Heart left ventricle (tissue), 16 donors: ENCODE measurements at regions of chr1 and their contacts with region 1.

Region 1: DNA sequence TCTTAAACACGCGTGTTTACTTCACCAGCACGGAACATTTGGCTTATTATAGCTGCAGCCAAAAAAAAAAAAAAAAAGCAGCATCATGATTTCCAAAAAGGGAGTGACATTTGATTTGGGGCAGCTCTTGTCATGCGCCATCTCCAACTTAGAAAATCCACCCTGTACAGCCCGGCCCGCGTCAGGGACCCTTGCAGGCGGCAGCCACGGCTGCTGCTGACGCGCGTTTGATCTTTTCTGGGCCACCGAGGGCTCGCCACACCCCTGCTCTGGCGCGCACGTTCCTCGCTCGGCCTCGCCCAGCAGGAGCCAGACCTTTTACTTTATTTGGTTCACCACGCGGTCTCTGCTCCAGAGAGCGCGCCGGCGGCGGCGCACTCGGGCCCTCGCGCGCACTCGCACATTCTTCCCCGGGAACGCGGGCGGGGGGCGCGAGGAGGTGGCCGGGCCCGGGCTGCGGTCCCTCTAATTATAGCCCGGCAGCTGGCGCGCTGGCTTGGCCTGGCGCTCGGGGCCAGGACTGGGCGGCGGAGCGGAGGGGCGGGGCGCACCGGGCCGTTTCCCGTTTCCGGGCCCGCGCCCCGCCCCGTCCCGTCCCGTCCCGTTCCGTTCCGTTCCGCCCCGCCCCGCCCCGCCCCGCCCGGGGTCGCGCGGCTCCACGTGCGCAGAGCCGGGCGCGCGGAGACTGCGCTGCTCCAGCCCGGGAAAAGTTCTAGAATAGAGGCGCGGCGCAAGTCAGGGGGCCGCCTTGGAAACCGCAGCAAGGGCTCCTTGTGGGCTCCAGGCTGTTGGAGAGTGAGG is 10.2 kb downstream of the IRF2BP2 start:
- DNase-seq: peak; percentile 91 to 96 (median 94)
- ATAC-seq: peak; percentile 77 to 95 (median 88)
- H3K4me3 ChIP-seq: peak overlapping the region in 11 of 12 donors; percentile 29 to 86 (median 51)
- H3K27ac ChIP-seq: peak overlapping the region; percentile 88 to 100 (median 99)
- H3K4me1 ChIP-seq: peaks cover 29 to 66% (median 50%) of the 10 kb centered on the region in 12 donors
- H3K27me3 ChIP-seq: no peaks in the 10 kb centered on the region
- CTCF ChIP-seq: peak in 1 of 12 donors; percentile 10
- POLR2A ChIP-seq: peak in 1 of 2 donors; percentile 74

Region 2: GRCh38 chr1:234478481-234479309 is 121.1 kb before region 1 on chr1 and contains the start of gene TARBP1:
- intact Hi-C with region 1: no loop called
- DNase-seq: peak; percentile 68 to 87 (median 72)
- ATAC-seq: peak; percentile 81 to 93 (median 86)
- H3K4me3 ChIP-seq: peak within 1 kb of the TSS; percentile 12 to 96 (median 82)
- H3K27ac ChIP-seq: peak within 1 kb of the TSS; percentile 71 to 97 (median 88)
- H3K4me1 ChIP-seq: peaks cover 0 to 37% (median 11%) of the 10 kb centered on the region in 12 donors
- H3K27me3 ChIP-seq: peaks cover 0 to 7% (median 0%) of the 10 kb centered on the region in 9 donors
- CTCF ChIP-seq: peak in 6 of 12 donors; percentile 5 to 33 (median 22)
- POLR2A ChIP-seq: peak in 1 of 2 donors; percentile 66
- total RNA-seq, gene TARBP1: 7.1 to 18.2 (median 9.9) TPM

Region 3: GRCh38 chr1:234533975-234534876 is 65.6 kb before region 1 on chr1:
- intact Hi-C with region 1: loop called (anchors 1 to 5 kb)
- DNase-seq: peak; percentile 93 to 97 (median 94)
- ATAC-seq: peak; percentile 7 to 19 (median 16)
- H3K4me3 ChIP-seq: peak overlapping the region in 1 of 12 donors; percentile 13
- H3K27ac ChIP-seq: peak overlapping the region; percentile 91 to 99 (median 98)
- H3K4me1 ChIP-seq: peaks cover 35 to 100% (median 98%) of the 10 kb centered on the region in 12 donors
- H3K27me3 ChIP-seq: no peaks in the 10 kb centered on the region
- CTCF ChIP-seq: no peak
- POLR2A ChIP-seq: no peak

Region 4: GRCh38 chr1:234970731-234971476 is 371.1 kb after region 1 on chr1:
- intact Hi-C with region 1: loop called in 2 of 10 experiments (anchors 5 to 10 kb)
- DNase-seq: peak in 4 of 5 donors; percentile 74 to 84 (median 76)
- ATAC-seq: peak; percentile 75 to 80 (median 78)
- H3K4me3 ChIP-seq: peak overlapping the region in 4 of 12 donors; percentile 40 to 46 (median 44)
- H3K27ac ChIP-seq: peak overlapping the region; percentile 67 to 94 (median 83)
- H3K4me1 ChIP-seq: peaks cover 0 to 64% (median 32%) of the 10 kb centered on the region in 12 donors
- H3K27me3 ChIP-seq: no peaks in the 10 kb centered on the region
- CTCF ChIP-seq: no peak
- POLR2A ChIP-seq: peak in 1 of 2 donors; percentile 18

Region 5: GRCh38 chr1:234978397-234979295 is 378.8 kb after region 1 on chr1:
- intact Hi-C with region 1: loop called in 4 of 10 experiments (anchors 5 to 10 kb)
- DNase-seq: peak in 4 of 5 donors; percentile 48 to 71 (median 60)
- ATAC-seq: peak; percentile 7 to 51 (median 22)
- H3K4me3 ChIP-seq: peak overlapping the region in 2 of 12 donors; percentile 15 to 55
- H3K27ac ChIP-seq: peak overlapping the region; percentile 71 to 98 (median 88)
- H3K4me1 ChIP-seq: peaks cover 15 to 91% (median 45%) of the 10 kb centered on the region in 12 donors
- H3K27me3 ChIP-seq: no peaks in the 10 kb centered on the region
- CTCF ChIP-seq: peak in 5 of 12 donors; percentile 6 to 39 (median 19)
- POLR2A ChIP-seq: no peak

Region 6: DNA sequence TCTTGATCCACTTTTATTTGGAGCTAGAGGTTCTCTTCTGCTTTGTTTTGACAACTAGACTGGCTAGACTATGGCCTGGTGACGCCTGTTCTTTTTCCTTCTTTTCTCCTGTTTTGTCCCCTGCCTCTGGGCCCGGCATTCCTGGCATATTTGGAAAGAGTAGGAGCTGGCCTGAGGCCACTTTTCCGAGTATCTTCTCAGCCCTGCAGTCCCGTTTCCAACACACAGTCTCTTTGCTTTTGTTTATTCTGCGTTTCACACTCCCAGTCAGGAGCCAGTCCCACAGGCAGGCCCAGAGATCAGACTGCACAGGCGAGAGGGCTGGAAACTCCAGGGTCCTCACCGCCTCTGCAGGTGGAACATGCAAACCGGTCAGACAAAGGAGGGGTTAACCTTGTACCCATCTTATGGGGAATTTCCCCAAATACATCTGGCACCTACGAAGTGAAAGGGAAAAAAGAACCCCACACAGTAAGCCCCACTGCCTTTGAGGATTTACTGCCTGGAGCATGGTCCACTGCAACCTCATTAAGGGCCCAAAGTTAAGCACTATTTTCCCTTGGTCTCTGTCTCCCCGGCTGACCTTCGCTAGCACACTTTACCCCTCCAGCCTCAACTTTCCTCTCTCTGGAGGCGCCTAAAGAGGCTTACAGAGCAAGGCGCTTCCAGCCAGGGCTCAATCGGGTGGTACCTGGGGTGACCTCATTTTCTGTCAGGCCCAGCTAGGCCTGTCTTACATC is 387.8 kb after region 1 on chr1:
- intact Hi-C with region 1: loop called in 3 of 10 experiments (anchors 5 to 10 kb)
- DNase-seq: peak in 4 of 5 donors; percentile 65 to 76 (median 76)
- ATAC-seq: peak; percentile 81 to 92 (median 88)
- H3K4me3 ChIP-seq: no peak overlapping the region
- H3K27ac ChIP-seq: peak overlapping the region; percentile 79 to 98 (median 90)
- H3K4me1 ChIP-seq: peaks cover 15 to 66% (median 35%) of the 10 kb centered on the region in 12 donors
- H3K27me3 ChIP-seq: no peaks in the 10 kb centered on the region
- CTCF ChIP-seq: no peak
- POLR2A ChIP-seq: no peak

Region 7: DNA sequence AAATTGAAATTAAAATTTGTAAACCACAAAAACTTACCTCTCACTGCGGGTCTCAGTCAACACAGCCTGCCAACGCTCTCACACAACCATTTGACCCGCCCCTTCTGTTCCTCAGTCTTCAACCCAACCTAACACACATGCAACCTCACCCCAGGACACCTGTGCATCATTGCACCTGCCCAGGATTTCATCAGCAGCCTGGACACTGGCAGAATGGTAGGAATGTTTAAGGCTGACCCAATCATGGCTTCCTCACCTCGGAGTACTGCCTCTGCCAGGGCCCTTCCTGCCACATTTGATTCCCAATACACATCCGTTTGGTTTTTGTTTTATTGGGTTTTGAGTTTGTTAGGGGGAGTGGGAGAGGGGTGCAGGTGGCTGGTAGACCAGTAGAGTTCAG is 488.1 kb after region 1 on chr1:
- intact Hi-C with region 1: loop called in 8 of 10 experiments (anchors 1 to 5 kb)
- DNase-seq: no peak
- ATAC-seq: no peak
- H3K4me3 ChIP-seq: no peak overlapping the region
- H3K27ac ChIP-seq: no peak overlapping the region
- H3K4me1 ChIP-seq: peaks cover 0 to 16% (median 14%) of the 10 kb centered on the region in 12 donors
- H3K27me3 ChIP-seq: no peaks in the 10 kb centered on the region
- CTCF ChIP-seq: no peak
- POLR2A ChIP-seq: no peak